Activated naive CD4-positive, alpha-beta T cell treated with anti-CD3 and anti-CD28 coated beads, Interleukin-2, amount 10 ng/mL, durations not matched to agents 7 days and 5 days (primary cell): ENCODE measurements at regions of chr10 and their contacts with region 1.

Region 1: GRCh38 chr10:80046629-80047441 is 31.6 kb upstream of the TMEM254 start:
- DNase-seq: peak; percentile 78
- H3K4me3 Mint-ChIP-seq: no peak overlapping the region
- H3K27ac Mint-ChIP-seq: no peak overlapping the region
- H3K4me1 Mint-ChIP-seq: no peaks in the 10 kb centered on the region
- H3K27me3 Mint-ChIP-seq: peaks cover 21% of the 10 kb centered on the region

Region 2: DNA sequence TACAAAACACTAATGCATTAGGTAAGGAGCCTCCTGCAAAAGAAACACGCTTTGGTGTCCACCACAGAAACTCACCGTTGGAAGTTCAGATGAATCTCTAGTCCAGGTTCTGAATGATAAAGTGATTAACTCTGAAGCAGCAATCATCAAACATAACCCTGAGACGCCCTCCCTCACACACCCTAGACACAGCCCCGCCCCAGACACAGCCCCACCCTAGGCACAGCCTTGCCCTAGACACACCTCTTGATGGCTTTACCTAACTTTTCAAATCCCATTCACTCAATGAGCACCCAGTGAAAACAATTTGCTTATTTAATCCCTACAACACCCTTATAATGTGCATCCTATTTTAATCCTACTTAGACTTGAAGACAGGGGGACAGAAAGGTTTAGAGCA is 10.3 kb after region 1 on chr10:
- CTCF ChIA-PET with region 1: interaction called, 14 read pairs
- DNase-seq: no peak
- H3K4me3 Mint-ChIP-seq: no peak overlapping the region
- H3K27ac Mint-ChIP-seq: no peak overlapping the region
- H3K4me1 Mint-ChIP-seq: peaks cover 3% of the 10 kb centered on the region
- H3K27me3 Mint-ChIP-seq: no peaks in the 10 kb centered on the region

Region 3: GRCh38 chr10:80272793-80273517 is 226.1 kb after region 1 on chr10:
- CTCF ChIA-PET with region 1: no interaction called
- DNase-seq: no peak
- H3K4me3 Mint-ChIP-seq: no peak overlapping the region
- H3K27ac Mint-ChIP-seq: no peak overlapping the region
- H3K4me1 Mint-ChIP-seq: no peaks in the 10 kb centered on the region
- H3K27me3 Mint-ChIP-seq: peaks cover 9% of the 10 kb centered on the region